Activated CD4-positive, alpha-beta T cell treated with anti-CD3 and anti-CD28 coated beads, Interleukin-2, amount 10 ng/mL, durations not matched to agents 7 days and 5 days (primary cell): ENCODE measurements at regions of chr2 and their contacts with region 1.

Region 1: DNA sequence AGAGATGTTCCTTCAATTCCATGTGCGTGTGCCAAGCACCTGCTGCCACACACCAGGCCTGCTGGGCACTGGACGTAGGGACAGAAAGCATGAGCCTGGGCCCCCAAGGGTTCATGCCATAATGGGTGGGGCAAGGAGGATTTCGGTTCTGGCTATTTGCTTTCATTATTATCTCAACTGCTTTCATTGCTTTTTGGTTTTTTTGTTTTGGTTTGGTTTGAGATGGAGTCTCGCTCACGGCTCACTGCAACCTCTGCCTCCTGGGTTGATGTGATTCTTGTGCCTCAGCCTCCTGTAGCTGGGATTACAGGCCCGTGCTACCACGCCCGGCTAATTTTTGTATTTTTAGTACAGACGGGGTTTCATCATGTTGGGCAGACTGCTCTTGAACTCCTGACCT is 57.2 kb downstream of the SF3B1 start:
- DNase-seq: no peak
- H3K4me3 Mint-ChIP-seq: no peak overlapping the region
- H3K27ac Mint-ChIP-seq: no peak overlapping the region
- H3K4me1 Mint-ChIP-seq: peaks cover 20% of the 10 kb centered on the region
- H3K27me3 Mint-ChIP-seq: no peaks in the 10 kb centered on the region

Region 2: GRCh38 chr2:197113275-197113711 is 264.4 kb before region 1 on chr2:
- CTCF ChIA-PET with region 1: interaction called, 4 read pairs
- POLR2A ChIA-PET with region 1: interaction called, 10 read pairs
- DNase-seq: no peak
- H3K4me3 Mint-ChIP-seq: no peak overlapping the region
- H3K27ac Mint-ChIP-seq: no peak overlapping the region
- H3K4me1 Mint-ChIP-seq: peaks cover 20% of the 10 kb centered on the region
- H3K27me3 Mint-ChIP-seq: no peaks in the 10 kb centered on the region

Region 3: GRCh38 chr2:197414515-197414914 is 36.8 kb after region 1 on chr2:
- CTCF ChIA-PET with region 1: no interaction called
- POLR2A ChIA-PET with region 1: no interaction called
- DNase-seq: no peak
- H3K4me3 Mint-ChIP-seq: no peak overlapping the region
- H3K27ac Mint-ChIP-seq: no peak overlapping the region
- H3K4me1 Mint-ChIP-seq: peaks cover 2% of the 10 kb centered on the region
- H3K27me3 Mint-ChIP-seq: no peaks in the 10 kb centered on the region